GM10248 (cell line): ENCODE measurements at regions of chr7 and their contacts with region 1.

Region 1: GRCh38 chr7:151759591-151760042 is 117.3 kb downstream of the PRKAG2 start:
- DNase-seq: peak; percentile 79
- CTCF ChIP-seq: peak; percentile 86

Region 2: DNA sequence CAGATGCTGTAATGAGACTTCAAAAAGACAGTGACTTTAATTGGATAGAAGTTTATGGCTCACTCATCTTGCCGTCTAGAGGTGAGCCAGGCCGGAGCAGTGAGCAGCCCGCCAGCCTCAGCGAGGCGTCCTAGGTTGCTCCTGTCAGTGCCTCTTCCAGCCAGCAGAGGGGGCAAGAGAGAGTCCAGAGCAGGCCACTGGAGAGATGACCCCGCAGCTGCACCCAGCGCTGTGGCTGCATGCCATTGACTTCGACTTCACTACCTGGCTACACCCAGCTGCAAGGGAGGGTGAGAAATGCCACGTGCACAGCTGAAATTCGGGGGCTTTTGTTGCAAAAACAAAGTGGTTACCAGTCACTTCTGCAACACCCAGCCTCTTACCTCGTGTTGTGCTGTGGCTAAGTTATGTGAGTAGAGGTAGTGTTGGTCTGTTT is 391.5 kb before region 1 on chr7:
- CTCF ChIA-PET with region 1: interaction called, 25 read pairs
- POLR2A ChIA-PET with region 1: no interaction called
- DNase-seq: peak; percentile 84
- CTCF ChIP-seq: peak; percentile 92

Region 3: GRCh38 chr7:151575341-151575870 is 184.2 kb before region 1 on chr7:
- CTCF ChIA-PET with region 1: interaction called, 14 read pairs
- POLR2A ChIA-PET with region 1: no interaction called
- DNase-seq: no peak
- CTCF ChIP-seq: no peak

Region 4: DNA sequence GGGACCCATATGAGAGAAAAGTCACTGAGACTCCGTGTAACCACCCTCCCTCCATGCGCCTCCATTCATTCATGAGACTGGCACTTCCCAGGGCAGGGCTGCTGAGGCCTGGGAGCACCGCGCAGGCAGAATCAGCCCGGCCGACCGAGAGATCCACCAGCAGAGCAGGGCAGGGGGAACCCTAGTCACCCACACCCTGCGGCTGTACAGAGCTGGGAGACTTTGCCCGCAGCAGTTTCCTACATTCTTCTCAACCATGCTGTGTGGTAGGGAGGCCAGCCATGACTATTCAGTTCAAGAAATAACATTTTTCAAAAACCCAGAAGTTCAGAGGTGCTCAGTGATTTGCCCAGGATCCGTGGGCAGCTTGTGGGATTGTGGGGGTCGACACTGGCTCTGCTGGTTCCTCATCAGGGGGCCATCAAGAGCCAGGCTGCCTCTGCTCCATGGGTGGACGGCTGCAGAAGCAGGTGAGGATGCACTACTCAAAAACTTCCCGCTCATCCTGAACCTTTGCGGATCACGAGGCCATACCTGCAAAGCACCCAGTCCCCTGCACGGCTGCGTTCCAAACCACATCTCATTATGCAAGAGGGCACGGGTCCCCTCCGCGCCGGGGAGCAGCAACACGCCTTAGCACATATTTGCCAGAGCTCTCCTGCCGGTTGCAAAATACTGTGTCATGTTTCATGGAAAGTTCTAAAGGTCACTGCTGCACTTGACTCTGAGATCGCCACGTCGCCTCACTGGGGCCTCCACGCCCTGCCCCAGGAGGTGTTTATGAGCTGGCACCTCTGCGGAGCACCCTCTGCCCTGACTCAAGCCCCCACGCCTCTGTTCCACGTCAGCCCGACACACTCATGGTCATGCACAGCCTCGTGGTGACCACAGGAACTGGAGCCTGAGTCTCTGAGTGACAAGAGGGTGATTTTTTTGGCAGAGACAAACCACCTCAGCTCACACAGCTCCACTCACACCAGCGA is 14.7 kb before region 1 on chr7:
- CTCF ChIA-PET with region 1: interaction called, 13 read pairs
- POLR2A ChIA-PET with region 1: no interaction called
- DNase-seq: no peak
- CTCF ChIP-seq: no peak

Region 5: DNA sequence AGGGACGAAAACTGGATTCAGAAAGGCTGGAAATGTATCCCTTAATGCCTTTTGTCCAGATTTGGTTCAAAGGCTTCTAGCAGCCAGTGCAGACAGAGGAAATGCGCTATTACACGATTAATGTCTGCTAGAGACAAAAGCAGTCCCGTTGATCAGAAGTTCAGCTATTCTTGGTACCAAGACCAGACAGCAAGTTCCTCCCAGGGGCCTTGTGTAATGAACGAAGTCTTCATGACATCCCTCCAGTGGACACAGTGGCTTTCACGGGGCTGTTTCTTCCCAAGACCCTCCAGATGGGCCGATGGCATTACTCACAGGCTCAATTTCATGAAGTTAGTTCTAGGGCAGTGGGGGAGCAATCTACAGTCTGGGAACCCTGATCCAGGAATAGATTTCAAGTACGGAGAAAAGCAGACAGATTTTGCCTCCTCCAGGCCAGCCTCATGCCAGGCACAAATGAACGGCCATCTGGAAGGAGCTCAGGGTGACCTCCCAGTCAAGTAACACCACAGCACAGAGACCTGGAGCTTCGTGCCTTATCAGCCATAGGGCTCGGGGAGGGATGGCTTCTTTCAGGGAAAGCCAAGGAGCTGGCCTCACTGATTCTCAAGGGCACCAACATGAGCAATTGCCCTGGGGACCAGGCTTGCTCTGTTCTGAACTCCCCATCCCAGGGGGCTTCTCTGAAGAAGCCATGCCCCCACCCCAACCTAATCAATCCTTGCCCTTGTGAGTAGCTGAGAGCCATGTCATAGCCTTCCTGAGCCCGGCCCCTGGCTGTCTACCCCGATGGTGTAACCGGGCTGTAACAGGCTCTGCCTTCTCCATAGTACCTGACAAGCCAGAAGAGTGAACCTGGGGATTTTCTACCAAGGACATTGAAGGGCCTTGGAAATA is 16.2 kb after region 1 on chr7:
- CTCF ChIA-PET with region 1: interaction called, 17 read pairs
- POLR2A ChIA-PET with region 1: no interaction called
- DNase-seq: no peak
- CTCF ChIP-seq: no peak